CD4-positive, alpha-beta memory T cell (primary cell): ENCODE measurements at regions of chr1 and their contacts with region 1.

Region 1: DNA sequence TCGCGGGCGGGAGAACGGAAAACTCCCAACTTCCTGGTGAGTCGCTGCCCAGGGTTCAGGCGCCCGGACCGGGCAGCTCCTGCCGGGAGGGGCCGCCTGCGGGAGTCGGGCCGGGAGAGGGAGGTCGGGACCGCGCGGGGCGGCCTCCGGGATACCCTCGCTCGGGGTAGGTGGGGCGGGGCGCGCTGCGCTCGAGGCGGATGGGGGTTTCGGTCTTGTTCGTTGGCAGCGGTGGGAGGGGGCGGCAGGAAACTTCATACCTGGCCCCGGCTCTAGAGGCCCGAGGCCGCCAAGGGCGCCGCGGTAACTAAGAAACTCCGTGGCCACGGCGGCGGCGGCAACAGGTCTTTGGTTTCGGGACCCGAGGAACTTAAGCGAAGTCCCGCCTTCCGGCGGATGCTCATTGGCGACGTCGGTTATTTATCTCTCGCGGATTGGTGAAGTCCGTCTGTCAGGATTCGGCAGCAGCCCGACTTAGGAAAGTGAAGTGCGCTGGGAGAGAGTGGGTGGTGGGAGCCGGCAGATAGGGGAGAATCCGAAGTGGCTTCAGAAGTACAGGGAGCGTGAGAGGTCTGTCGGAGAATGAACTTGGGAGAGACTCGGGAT is 546 bp downstream of the NEK7 start:
- DNase-seq: peak; percentile 77 to 89 (median 79)
- H3K4me3 ChIP-seq: peak overlapping the region; percentile 59 to 83
- H3K4me3 Mint-ChIP-seq: peak overlapping the region; percentile 98 to 100 (median 100)
- H3K27ac ChIP-seq: peak overlapping the region; percentile 95
- H3K27ac Mint-ChIP-seq: peak overlapping the region; percentile 98 to 100 (median 100)
- H3K4me1 ChIP-seq: peaks cover 43% of the 10 kb centered on the region
- H3K4me1 Mint-ChIP-seq: peaks cover 27 to 57% (median 41%) of the 10 kb centered on the region in 4 donors
- H3K27me3 ChIP-seq: no peaks in the 10 kb centered on the region
- H3K27me3 Mint-ChIP-seq: no peaks in the 10 kb centered on the region

Region 2: GRCh38 chr1:197775282-197776262 is 381.8 kb before region 1 on chr1 and contains the start of gene DENND1B:
- CTCF ChIA-PET with region 1: interaction called, 3 read pairs
- POLR2A ChIA-PET with region 1: no interaction called
- intact Hi-C with region 1: loop called (anchors 1 kb)
- DNase-seq: peak; percentile 82 to 88 (median 83)
- H3K4me3 ChIP-seq: peak within 1 kb of the TSS; percentile 73 to 84
- H3K4me3 Mint-ChIP-seq: peak within 1 kb of the TSS; percentile 87 to 97 (median 92)
- H3K27ac ChIP-seq: peak within 1 kb of the TSS; percentile 68
- H3K27ac Mint-ChIP-seq: peak within 1 kb of the TSS; percentile 94 to 99 (median 98)
- H3K4me1 ChIP-seq: peaks cover 71% of the 10 kb centered on the region
- H3K4me1 Mint-ChIP-seq: peaks cover 56 to 73% (median 65%) of the 10 kb centered on the region in 4 donors
- H3K27me3 ChIP-seq: no peaks in the 10 kb centered on the region
- H3K27me3 Mint-ChIP-seq: no peaks in the 10 kb centered on the region
- total RNA-seq, gene DENND1B: 25.5 to 26.3 TPM

Region 3: DNA sequence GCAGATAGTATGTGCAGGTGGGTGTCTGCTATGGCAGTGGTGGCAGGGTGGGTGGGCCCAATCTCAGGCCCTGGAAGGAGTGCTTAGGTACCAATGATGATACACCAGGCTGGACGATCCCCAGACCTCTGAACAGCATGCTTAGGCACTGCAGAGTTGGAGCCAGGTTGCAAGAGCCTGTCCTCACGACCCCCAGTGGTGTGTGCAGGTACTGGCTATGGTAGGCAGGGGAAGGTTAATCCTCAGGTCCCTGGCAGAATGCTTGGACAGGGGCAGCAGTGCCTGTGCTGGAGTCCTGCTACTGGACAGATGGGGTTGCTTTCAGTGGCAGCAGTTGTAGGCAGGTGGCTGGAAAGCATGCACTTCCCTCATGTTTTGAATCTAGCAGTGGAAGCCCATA is 101.1 kb before region 1 on chr1:
- CTCF ChIA-PET with region 1: no interaction called
- POLR2A ChIA-PET with region 1: no interaction called
- intact Hi-C with region 1: no loop called
- DNase-seq: peak in 2 of 5 donors; percentile 8 to 36
- H3K4me3 ChIP-seq: no peak overlapping the region
- H3K4me3 Mint-ChIP-seq: no peak overlapping the region
- H3K27ac ChIP-seq: no peak overlapping the region
- H3K27ac Mint-ChIP-seq: peak overlapping the region in 2 of 7 donors; percentile 28 to 42
- H3K4me1 ChIP-seq: peaks cover 9% of the 10 kb centered on the region
- H3K4me1 Mint-ChIP-seq: peaks cover 2 to 14% (median 5%) of the 10 kb centered on the region in 4 donors
- H3K27me3 ChIP-seq: no peaks in the 10 kb centered on the region
- H3K27me3 Mint-ChIP-seq: peaks cover 0 to 3% of the 10 kb centered on the region in 2 donors

Region 4: GRCh38 chr1:198088360-198089071 is 68.8 kb before region 1 on chr1:
- CTCF ChIA-PET with region 1: interaction called, 6 read pairs
- POLR2A ChIA-PET with region 1: interaction called, 3 read pairs
- intact Hi-C with region 1: loop called (anchors 5 kb)
- DNase-seq: peak in 4 of 5 donors; percentile 32 to 41 (median 37)
- H3K4me3 ChIP-seq: no peak overlapping the region
- H3K4me3 Mint-ChIP-seq: no peak overlapping the region
- H3K27ac ChIP-seq: no peak overlapping the region
- H3K27ac Mint-ChIP-seq: no peak overlapping the region
- H3K4me1 ChIP-seq: no peaks in the 10 kb centered on the region
- H3K4me1 Mint-ChIP-seq: peaks cover 0 to 2% (median under 1%) of the 10 kb centered on the region in 4 donors
- H3K27me3 ChIP-seq: no peaks in the 10 kb centered on the region
- H3K27me3 Mint-ChIP-seq: peaks cover 2 to 4% of the 10 kb centered on the region in 2 donors

Region 5: DNA sequence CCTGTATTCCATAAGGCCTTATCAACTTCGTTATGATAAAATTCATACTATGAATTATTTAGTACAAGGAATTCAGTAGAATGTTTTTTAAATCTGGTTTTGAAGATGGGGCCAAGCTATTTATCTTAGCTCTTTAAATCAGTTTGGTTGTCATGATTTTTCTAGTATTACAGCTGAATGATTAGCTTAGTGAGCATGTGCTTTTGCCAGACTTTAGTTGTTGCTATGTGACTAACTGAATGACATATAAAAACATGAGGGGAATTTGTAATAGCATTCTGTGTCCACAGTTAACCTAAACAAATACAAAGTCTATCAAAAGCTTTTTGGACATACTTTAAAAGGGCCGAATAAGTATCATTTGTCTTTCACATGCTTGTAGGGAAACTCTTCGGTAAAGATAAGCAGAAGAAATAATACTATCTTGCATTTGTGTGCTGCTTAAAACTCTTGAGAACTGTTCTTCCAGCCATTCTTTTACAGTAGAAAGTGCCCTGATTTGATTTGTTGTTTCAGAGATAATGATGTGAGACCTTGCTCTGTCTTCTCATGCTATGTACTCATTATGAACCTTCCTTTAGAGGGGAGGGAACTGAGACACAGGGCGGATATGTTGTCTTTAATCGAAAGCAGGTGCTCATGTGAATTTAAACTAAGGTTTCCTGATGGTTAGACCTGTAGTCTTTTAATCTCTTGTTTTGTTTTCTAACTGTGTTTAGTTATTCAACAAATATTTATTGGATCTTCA is 18.3 kb after region 1 on chr1:
- CTCF ChIA-PET with region 1: interaction called, 35 read pairs
- POLR2A ChIA-PET with region 1: interaction called, 120 read pairs
- intact Hi-C with region 1: loop called (anchors 2 kb)
- DNase-seq: peak; percentile 34 to 53 (median 40)
- H3K4me3 ChIP-seq: peak overlapping the region in 1 of 2 donors; percentile 7
- H3K4me3 Mint-ChIP-seq: peak overlapping the region; percentile 33 to 81 (median 69)
- H3K27ac ChIP-seq: peak overlapping the region; percentile 42
- H3K27ac Mint-ChIP-seq: peak overlapping the region; percentile 79 to 96 (median 84)
- H3K4me1 ChIP-seq: peaks cover 98% of the 10 kb centered on the region
- H3K4me1 Mint-ChIP-seq: peaks cover 73 to 90% (median 81%) of the 10 kb centered on the region in 4 donors
- H3K27me3 ChIP-seq: no peaks in the 10 kb centered on the region
- H3K27me3 Mint-ChIP-seq: no peaks in the 10 kb centered on the region

Region 6: DNA sequence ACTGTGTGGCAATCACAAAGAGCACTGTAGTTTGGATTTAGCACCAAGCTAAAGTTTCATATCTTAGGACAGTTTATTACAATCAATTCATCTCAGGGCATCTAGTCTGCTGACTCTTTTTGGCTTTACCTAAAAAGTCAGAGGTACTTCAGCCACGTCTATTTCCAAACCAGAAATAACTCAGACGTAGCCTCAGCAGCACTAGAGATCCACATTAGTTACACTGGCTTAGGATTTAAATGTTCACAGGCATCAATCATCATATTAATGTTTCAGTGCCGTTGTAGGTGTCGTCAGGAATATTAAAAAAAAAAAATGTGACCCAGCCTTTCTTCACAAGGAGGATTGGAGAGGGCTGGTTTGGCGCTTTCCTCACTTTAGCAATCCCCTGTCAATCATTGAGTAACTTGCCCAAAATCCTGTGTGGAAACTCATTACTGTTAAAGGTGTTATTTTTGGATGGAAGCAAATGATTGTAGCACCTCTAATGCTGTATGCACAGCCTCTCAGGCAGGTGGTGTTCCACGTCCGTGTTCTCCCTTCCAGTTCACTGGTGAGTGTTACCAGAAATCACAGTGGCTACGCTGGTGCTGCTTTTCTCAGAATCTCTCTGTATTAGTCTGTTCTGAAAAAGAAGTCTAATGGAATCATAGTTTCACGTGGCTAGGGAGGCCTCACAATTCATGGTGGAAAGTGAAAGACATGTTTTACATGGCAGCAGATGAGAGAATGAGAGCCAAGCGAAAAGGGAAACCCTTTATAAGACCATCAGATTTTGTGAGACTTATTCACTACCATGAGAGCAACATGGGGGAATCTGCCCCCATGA is 44.8 kb after region 1 on chr1:
- CTCF ChIA-PET with region 1: no interaction called
- POLR2A ChIA-PET with region 1: interaction called, 3 read pairs
- intact Hi-C with region 1: loop called (anchors 2 kb)
- DNase-seq: no peak
- H3K4me3 ChIP-seq: no peak overlapping the region
- H3K4me3 Mint-ChIP-seq: peak overlapping the region in 7 of 8 donors; percentile 35 to 72 (median 62)
- H3K27ac ChIP-seq: no peak overlapping the region
- H3K27ac Mint-ChIP-seq: peak overlapping the region in 6 of 7 donors; percentile 43 to 81 (median 74)
- H3K4me1 ChIP-seq: peaks cover 60% of the 10 kb centered on the region
- H3K4me1 Mint-ChIP-seq: peaks cover 44 to 84% (median 63%) of the 10 kb centered on the region in 4 donors
- H3K27me3 ChIP-seq: no peaks in the 10 kb centered on the region
- H3K27me3 Mint-ChIP-seq: no peaks in the 10 kb centered on the region

Region 7: GRCh38 chr1:198258491-198258890 is 101.1 kb after region 1 on chr1:
- CTCF ChIA-PET with region 1: interaction called, 7 read pairs
- POLR2A ChIA-PET with region 1: interaction called, 4 read pairs
- intact Hi-C with region 1: loop called (anchors 5 kb)
- DNase-seq: no peak
- H3K4me3 ChIP-seq: no peak overlapping the region
- H3K4me3 Mint-ChIP-seq: no peak overlapping the region
- H3K27ac ChIP-seq: no peak overlapping the region
- H3K27ac Mint-ChIP-seq: no peak overlapping the region
- H3K4me1 ChIP-seq: peaks cover 7% of the 10 kb centered on the region
- H3K4me1 Mint-ChIP-seq: peaks cover 26 to 43% (median 31%) of the 10 kb centered on the region in 4 donors
- H3K27me3 ChIP-seq: no peaks in the 10 kb centered on the region
- H3K27me3 Mint-ChIP-seq: no peaks in the 10 kb centered on the region

Region 8: DNA sequence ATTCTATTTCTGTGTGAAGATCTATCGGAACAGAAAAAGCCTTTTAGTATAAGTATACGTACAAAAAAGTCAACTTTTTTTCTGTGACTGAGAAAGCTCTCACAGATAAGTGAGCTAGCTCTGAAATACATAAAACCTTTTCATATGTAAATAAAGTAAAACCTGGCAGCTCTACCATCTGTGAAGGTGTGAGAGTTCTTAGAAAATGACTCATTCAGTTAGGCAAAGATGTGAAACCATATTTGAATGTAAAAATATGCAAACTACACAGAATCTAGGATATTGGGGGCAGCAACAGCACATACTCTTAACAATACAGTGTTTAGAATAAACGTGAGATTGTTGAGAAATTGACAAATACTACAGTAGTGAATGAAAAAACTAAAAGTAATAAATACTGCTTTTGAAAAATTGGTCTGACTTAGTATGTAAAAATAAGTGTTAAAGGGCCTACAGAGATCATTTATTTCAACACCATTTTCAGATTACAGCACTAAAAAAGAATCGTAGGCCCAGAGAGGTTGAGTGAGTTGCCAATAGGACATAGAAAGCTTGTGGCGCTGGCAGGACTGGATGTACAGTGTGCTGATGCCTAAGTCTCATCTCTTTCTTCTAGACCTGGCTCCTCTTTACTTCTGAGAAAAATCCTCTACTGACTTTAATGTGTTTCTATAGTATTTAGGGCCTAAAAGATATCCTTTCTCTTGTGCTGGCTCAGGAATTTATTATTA is 363.3 kb after region 1 on chr1:
- CTCF ChIA-PET with region 1: no interaction called
- POLR2A ChIA-PET with region 1: no interaction called
- intact Hi-C with region 1: loop called (anchors 5 kb)
- DNase-seq: peak in 4 of 5 donors; percentile 18 to 44 (median 25)
- H3K4me3 ChIP-seq: peak overlapping the region; percentile 19 to 46
- H3K4me3 Mint-ChIP-seq: peak overlapping the region; percentile 77 to 90 (median 80)
- H3K27ac ChIP-seq: peak overlapping the region; percentile 57
- H3K27ac Mint-ChIP-seq: peak overlapping the region; percentile 81 to 94 (median 91)
- H3K4me1 ChIP-seq: peaks cover 82% of the 10 kb centered on the region
- H3K4me1 Mint-ChIP-seq: peaks cover 57 to 84% (median 64%) of the 10 kb centered on the region in 4 donors
- H3K27me3 ChIP-seq: no peaks in the 10 kb centered on the region
- H3K27me3 Mint-ChIP-seq: no peaks in the 10 kb centered on the region